MCF 10A (cell line): ENCODE measurements at regions of chr1 and their contacts with region 1.

Region 1: DNA sequence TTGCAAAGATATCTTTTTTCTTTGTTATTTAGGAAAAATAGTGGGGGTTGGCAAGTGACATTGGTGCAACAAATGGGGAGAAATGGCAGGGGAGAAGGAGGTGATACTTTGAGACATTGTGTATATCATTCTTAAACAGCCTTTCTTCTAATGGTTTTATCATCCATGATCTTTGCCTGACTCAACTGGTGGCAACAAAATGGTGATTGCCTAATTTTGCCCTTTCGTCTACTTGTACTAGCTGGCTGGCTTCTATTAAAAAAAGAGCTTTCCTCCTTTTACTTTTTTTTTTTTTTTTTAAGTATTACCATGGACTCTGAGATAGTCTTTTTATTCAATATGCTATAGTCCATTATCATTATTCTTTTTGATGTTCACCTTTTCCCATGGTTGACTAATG is 27.7 kb downstream of the DESI2 start:
- DNase-seq: peak; percentile 31
- H3K4me3 Mint-ChIP-seq: no peak overlapping the region
- H3K27ac Mint-ChIP-seq: peak overlapping the region; percentile 10
- H3K4me1 Mint-ChIP-seq: peaks cover 14% of the 10 kb centered on the region
- H3K27me3 Mint-ChIP-seq: no peaks in the 10 kb centered on the region
- CTCF ChIP-seq: no peak

Region 2: DNA sequence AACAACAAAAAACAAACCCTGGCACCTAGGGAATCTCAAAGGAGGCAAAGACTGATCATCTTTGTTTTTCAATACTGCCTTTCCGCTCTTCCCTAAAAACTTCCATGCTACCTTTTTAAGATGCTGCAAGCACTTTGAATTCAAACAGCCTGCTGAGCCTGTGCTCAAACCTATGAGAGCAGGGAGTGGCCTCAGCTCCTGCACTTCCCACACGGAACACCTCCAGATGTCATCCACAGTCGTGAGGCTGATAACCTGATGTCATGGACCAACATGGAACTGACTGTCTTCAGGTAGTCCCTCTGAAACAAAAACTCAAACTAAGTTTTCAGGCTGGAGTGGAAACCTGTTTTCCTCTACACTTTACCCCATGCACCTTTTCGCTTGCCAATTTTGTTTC is 19.1 kb after region 1 on chr1:
- CTCF ChIA-PET with region 1: interaction called, 11 read pairs
- POLR2A ChIA-PET with region 1: interaction called, 4 read pairs
- intact Hi-C with region 1: no loop called
- DNase-seq: no peak
- H3K4me3 Mint-ChIP-seq: no peak overlapping the region
- H3K27ac Mint-ChIP-seq: no peak overlapping the region
- H3K4me1 Mint-ChIP-seq: no peaks in the 10 kb centered on the region
- H3K27me3 Mint-ChIP-seq: no peaks in the 10 kb centered on the region
- CTCF ChIP-seq: no peak